ENCODE measurements at regions of chr3 and their contacts with region 1.

Region 1: DNA sequence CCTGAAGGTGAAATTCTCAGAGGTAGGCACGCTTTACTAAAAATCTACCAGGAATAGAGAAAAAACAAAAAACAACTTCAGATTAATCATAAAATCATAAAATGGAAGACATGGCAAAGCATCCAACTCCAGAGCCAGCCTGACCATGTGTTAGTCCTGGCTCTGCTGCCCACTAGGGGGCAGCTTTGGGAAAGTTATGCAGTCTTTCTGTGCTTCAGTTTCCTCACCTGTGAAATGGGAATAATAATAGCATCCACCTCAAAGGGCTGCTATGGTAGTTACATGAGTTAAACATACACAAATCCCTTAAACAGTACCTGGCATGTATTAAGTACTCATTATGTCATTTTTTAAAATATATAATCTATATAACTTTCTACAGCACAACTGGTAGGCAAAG is 52.3 kb downstream of the WNT5A start:
- DNase-seq: no peak
- ATAC-seq: peak; percentile 89
- H3K4me3 ChIP-seq: no peak overlapping the region
- H3K27ac ChIP-seq: no peak overlapping the region
- H3K4me1 ChIP-seq: no peaks in the 10 kb centered on the region
- H3K27me3 ChIP-seq: no peaks in the 10 kb centered on the region; a peak in 2 of 4 replicates
- CTCF ChIP-seq: peak; percentile 73 to 79 (median 74)
- EP300 ChIP-seq: no peak
- POLR2A ChIP-seq: no peak
- RAD21 ChIP-seq: peak; percentile 63

Region 2: DNA sequence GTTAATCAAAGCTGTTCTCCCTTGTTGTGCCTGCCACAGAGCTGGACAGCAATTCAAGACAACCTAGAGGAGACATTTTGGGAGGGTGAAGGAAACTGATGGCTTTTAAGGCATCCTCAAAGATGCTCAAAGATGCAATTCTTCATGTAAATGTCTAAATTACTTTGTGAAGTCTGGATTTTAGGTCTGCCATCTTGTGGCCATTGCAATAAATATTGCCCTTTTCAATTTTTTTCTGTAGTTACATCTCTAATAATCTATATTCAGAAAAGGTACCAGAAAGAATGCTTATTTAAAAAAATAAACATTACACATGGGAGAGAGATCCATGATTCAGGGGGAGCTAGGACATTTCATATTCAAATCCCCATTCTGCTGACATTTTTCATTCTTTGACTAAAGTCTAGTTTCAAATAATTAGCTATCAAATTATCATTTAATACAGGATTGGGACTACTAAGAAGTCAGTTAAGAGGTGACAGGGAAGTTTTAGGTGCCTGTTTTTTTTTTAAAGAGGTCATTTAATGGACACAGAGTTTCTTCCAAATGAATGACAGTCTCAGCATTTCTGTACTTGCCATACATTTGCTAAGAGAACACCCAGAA is 312.1 kb after region 1 on chr3:
- CTCF ChIA-PET with region 1: interaction called, 11 read pairs
- POLR2A ChIA-PET with region 1: no interaction called
- RAD21 ChIA-PET with region 1: no interaction called
- SMC1A ChIA-PET with region 1: no interaction called
- in situ Hi-C with region 1: no loop called
- intact Hi-C with region 1: no loop called
- DNase-seq: no peak
- ATAC-seq: no peak
- H3K4me3 ChIP-seq: no peak overlapping the region
- H3K27ac ChIP-seq: no peak overlapping the region
- H3K4me1 ChIP-seq: no peaks in the 10 kb centered on the region
- H3K27me3 ChIP-seq: no peaks in the 10 kb centered on the region
- CTCF ChIP-seq: peak; percentile 32 to 47 (median 45); a peak in 4 of 6 replicates
- EP300 ChIP-seq: no peak
- POLR2A ChIP-seq: no peak
- RAD21 ChIP-seq: peak; percentile 48

Region 3: GRCh38 chr3:55765906-55766701 is 331.3 kb after region 1 on chr3:
- CTCF ChIA-PET with region 1: no interaction called
- POLR2A ChIA-PET with region 1: no interaction called
- RAD21 ChIA-PET with region 1: no interaction called
- SMC1A ChIA-PET with region 1: no interaction called
- in situ Hi-C with region 1: no loop called
- intact Hi-C with region 1: no loop called
- DNase-seq: no peak
- ATAC-seq: no peak
- H3K4me3 ChIP-seq: no peak overlapping the region
- H3K27ac ChIP-seq: no peak overlapping the region
- H3K4me1 ChIP-seq: no peaks in the 10 kb centered on the region
- H3K27me3 ChIP-seq: no peaks in the 10 kb centered on the region
- CTCF ChIP-seq: no peak
- EP300 ChIP-seq: no peak
- POLR2A ChIP-seq: no peak
- RAD21 ChIP-seq: no peak

Region 4: DNA sequence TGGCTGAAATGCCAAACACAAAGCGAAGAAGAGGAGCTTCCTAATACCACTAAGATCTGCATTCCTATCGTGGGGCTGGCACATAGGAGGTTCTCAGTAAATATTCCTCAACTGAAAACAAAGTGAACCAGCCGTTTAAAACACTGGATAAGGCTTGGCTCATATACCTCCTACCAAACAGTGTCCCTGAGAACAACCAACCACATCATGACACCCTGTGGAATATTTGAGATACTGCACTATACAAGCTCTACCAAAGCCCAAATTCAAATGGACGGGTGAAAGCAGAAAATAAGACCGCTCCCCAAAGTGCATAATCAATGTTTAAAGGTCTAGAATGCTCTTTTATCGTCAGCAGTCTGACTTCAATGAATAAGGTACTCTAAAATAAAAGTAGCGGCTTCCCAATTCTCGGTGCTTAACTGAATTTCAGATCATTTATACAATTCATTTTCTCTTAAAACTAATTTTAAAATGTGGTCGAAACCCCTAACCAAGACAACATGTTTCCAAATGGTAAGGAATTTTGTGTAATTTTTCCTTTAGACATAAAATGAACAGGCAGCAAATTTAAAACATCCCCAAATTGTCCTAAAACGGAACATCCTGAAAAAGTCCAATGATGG is 607.6 kb after region 1 on chr3:
- CTCF ChIA-PET with region 1: no interaction called
- POLR2A ChIA-PET with region 1: no interaction called
- RAD21 ChIA-PET with region 1: no interaction called
- SMC1A ChIA-PET with region 1: no interaction called
- in situ Hi-C with region 1: no loop called
- intact Hi-C with region 1: loop called (anchors 10 kb)
- DNase-seq: no peak
- ATAC-seq: peak; percentile 57
- H3K4me3 ChIP-seq: no peak overlapping the region
- H3K27ac ChIP-seq: no peak overlapping the region
- H3K4me1 ChIP-seq: no peaks in the 10 kb centered on the region
- H3K27me3 ChIP-seq: peaks cover 0 to 2% of the 10 kb centered on the region in 2 experiments; a peak in 1 of 4 replicates
- CTCF ChIP-seq: peak in 2 of 3 experiments; percentile 20 to 30; a peak in 2 of 6 replicates
- EP300 ChIP-seq: no peak
- POLR2A ChIP-seq: no peak
- RAD21 ChIP-seq: 0 out of 2 replicates have a peak, but pooled peaks have one; percentile 21

Region 5: GRCh38 chr3:56251343-56251945 is 816.7 kb after region 1 on chr3:
- CTCF ChIA-PET with region 1: interaction called, 4 read pairs
- POLR2A ChIA-PET with region 1: no interaction called
- RAD21 ChIA-PET with region 1: interaction called, 4 read pairs
- SMC1A ChIA-PET with region 1: no interaction called
- in situ Hi-C with region 1: no loop called
- intact Hi-C with region 1: loop called (anchors 2 kb)
- DNase-seq: peak; percentile 8
- ATAC-seq: peak; percentile 57; the same call in 2 of the 3 replicates
- H3K4me3 ChIP-seq: no peak overlapping the region
- H3K27ac ChIP-seq: no peak overlapping the region
- H3K4me1 ChIP-seq: no peaks in the 10 kb centered on the region
- H3K27me3 ChIP-seq: no peaks in the 10 kb centered on the region; a peak in 1 of 4 replicates
- CTCF ChIP-seq: peak; percentile 63 to 81 (median 75)
- EP300 ChIP-seq: no peak
- POLR2A ChIP-seq: no peak
- RAD21 ChIP-seq: peak; percentile 77

Measured in GM12878 (cell line).